H1 (cell line): ENCODE measurements at regions of chr1 and their contacts with region 1.

Region 1: GRCh38 chr1:155091071-155091709 is 12.6 kb downstream of the EFNA3 start:
- DNase-seq: peak; percentile 68 to 97
- H3K4me3 ChIP-seq: 0 out of 8 replicates have a peak overlapping the region, but pooled peaks of 1 of the 4 experiments have one; percentile 28
- H3K27ac ChIP-seq: no peak overlapping the region
- H3K4me1 ChIP-seq: peaks cover 0 to 17% (median 14%) of the 10 kb centered on the region in 4 experiments; a peak in 6 of 7 replicates
- H3K27me3 ChIP-seq: peaks cover 0 to 13% (median 2%) of the 10 kb centered on the region in 4 experiments; a peak in 2 of 7 replicates
- CTCF ChIP-seq: peak in 2 of 3 experiments; percentile 98; a peak in 3 of 4 replicates
- EP300 ChIP-seq: no peak
- POLR2A ChIP-seq: no peak
- RAD21 ChIP-seq: peak; percentile 80 to 87

Region 2: GRCh38 chr1:155105604-155106022 is 14.4 kb after region 1 on chr1:
- CTCF ChIA-PET with region 1: interaction called, 29 read pairs
- POLR2A ChIA-PET with region 1: no interaction called
- DNase-seq: no peak
- H3K4me3 ChIP-seq: no peak overlapping the region
- H3K27ac ChIP-seq: no peak overlapping the region
- H3K4me1 ChIP-seq: no peaks in the 10 kb centered on the region
- H3K27me3 ChIP-seq: no peaks in the 10 kb centered on the region
- CTCF ChIP-seq: no peak
- EP300 ChIP-seq: no peak
- POLR2A ChIP-seq: no peak
- RAD21 ChIP-seq: no peak

Region 3: GRCh38 chr1:155117617-155118016 is 26.4 kb after region 1 on chr1:
- CTCF ChIA-PET with region 1: interaction called, 13 read pairs
- POLR2A ChIA-PET with region 1: interaction called, 4 read pairs
- DNase-seq: no peak
- H3K4me3 ChIP-seq: no peak overlapping the region
- H3K27ac ChIP-seq: no peak overlapping the region
- H3K4me1 ChIP-seq: no peaks in the 10 kb centered on the region
- H3K27me3 ChIP-seq: peaks cover 0 to 3% (median 0%) of the 10 kb centered on the region in 4 experiments; a peak in 1 of 7 replicates
- CTCF ChIP-seq: no peak
- EP300 ChIP-seq: no peak
- POLR2A ChIP-seq: no peak
- RAD21 ChIP-seq: no peak

Region 4: GRCh38 chr1:155127105-155127964 is 36.1 kb after region 1 on chr1 and contains the start of gene EFNA1:
- CTCF ChIA-PET with region 1: interaction called, 73 read pairs
- POLR2A ChIA-PET with region 1: interaction called, 5 read pairs
- DNase-seq: peak in 1 of 2 experiments; percentile 63
- H3K4me3 ChIP-seq: peak within 1 kb of the TSS; percentile 45 to 71 (median 64)
- H3K27ac ChIP-seq: no peak within 1 kb of the TSS
- H3K4me1 ChIP-seq: peaks cover 16 to 58% (median 40%) of the 10 kb centered on the region in 4 experiments
- H3K27me3 ChIP-seq: peaks cover 33 to 50% (median 45%) of the 10 kb centered on the region in 4 experiments
- CTCF ChIP-seq: no peak
- EP300 ChIP-seq: no peak
- POLR2A ChIP-seq: no peak
- RAD21 ChIP-seq: no peak
- total RNA-seq, gene EFNA1: 4.0 and 4.9 TPM in 2 replicates

Region 5: DNA sequence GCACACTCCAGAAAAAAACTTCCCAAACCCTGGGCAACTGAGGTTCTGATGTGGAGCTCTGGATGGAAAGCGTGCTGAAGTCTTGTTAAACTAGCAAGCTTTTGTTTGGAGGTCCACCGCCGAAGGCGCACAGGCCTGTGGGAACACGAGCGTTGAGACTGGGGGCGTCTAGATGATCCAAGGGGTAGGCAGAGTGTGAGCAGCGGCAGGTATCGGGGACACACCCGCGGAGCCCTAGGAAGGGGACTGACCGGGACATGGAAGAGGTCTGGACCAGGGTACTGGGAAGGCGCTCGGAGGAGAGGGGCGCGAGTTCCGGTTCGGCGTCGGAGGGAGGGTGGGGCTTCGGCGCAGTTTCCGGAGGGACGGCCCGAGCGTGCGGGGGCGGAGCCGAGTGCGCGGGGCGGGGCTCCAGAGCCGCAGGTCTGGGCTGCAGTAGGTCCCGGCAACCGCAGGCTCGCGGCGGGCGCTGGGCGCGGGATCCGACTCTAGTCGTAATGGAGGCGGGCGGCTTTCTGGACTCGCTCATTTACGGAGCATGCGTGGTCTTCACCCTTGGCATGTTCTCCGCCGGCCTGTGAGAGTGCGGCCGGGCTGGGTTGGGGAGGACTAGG is 44.3 kb after region 1 on chr1 and contains the start of gene SLC50A1:
- CTCF ChIA-PET with region 1: interaction called, 73 read pairs
- POLR2A ChIA-PET with region 1: interaction called, 4 read pairs
- DNase-seq: peak; percentile 76 to 97
- H3K4me3 ChIP-seq: peak within 1 kb of the TSS; percentile 67 to 89 (median 85)
- H3K27ac ChIP-seq: peak within 1 kb of the TSS; percentile 61; the same call in 1 of the 2 replicates
- H3K4me1 ChIP-seq: peaks cover 4 to 26% (median 10%) of the 10 kb centered on the region in 4 experiments; a peak in 5 of 7 replicates
- H3K27me3 ChIP-seq: no peaks in the 10 kb centered on the region
- CTCF ChIP-seq: peak in 1 of 3 experiments; percentile 28; a peak in 2 of 4 replicates
- EP300 ChIP-seq: no peak
- POLR2A ChIP-seq: peak in 1 of 2 experiments; percentile 69; a peak in 2 of 3 replicates
- RAD21 ChIP-seq: no peak; a peak in 1 of 4 replicates
- total RNA-seq, gene SLC50A1: 36.5 and 41.6 TPM in 2 replicates

Region 6: GRCh38 chr1:155145491-155145890 is 54.3 kb after region 1 on chr1:
- CTCF ChIA-PET with region 1: interaction called, 12 read pairs
- POLR2A ChIA-PET with region 1: no interaction called
- DNase-seq: no peak
- H3K4me3 ChIP-seq: no peak overlapping the region
- H3K27ac ChIP-seq: no peak overlapping the region
- H3K4me1 ChIP-seq: no peaks in the 10 kb centered on the region
- H3K27me3 ChIP-seq: peaks cover 0 to 3% (median 0%) of the 10 kb centered on the region in 4 experiments; a peak in 2 of 7 replicates
- CTCF ChIP-seq: peak in 2 of 3 experiments; percentile 24 to 30; a peak in 2 of 4 replicates
- EP300 ChIP-seq: no peak
- POLR2A ChIP-seq: no peak
- RAD21 ChIP-seq: peak in 1 of 2 experiments; percentile 22; a peak in 2 of 4 replicates

Region 7: DNA sequence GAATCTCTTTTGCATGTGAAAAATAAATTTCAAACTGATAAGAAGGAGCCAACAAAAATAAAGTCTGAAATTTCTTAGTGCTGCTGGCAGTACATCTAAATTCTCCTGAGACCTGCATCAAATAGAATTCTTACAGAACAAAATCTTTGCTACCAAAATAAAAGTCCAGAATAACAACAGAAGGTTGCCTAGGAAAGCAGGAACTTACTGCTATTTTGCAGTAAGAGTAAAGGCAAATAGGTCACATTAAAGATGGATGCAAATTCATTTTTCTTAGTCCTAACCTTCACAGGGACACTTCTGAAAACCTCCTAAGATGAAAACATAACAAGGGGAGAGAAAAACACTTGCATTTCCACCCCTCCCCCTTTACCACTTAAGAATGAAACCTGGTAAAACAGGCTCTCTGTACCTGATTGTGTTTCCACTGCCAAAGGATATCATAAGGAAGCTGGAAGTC is 288.5 kb after region 1 on chr1:
- CTCF ChIA-PET with region 1: no interaction called
- POLR2A ChIA-PET with region 1: no interaction called
- DNase-seq: no peak
- H3K4me3 ChIP-seq: no peak overlapping the region
- H3K27ac ChIP-seq: no peak overlapping the region
- H3K4me1 ChIP-seq: no peaks in the 10 kb centered on the region
- H3K27me3 ChIP-seq: no peaks in the 10 kb centered on the region
- CTCF ChIP-seq: no peak
- EP300 ChIP-seq: no peak
- POLR2A ChIP-seq: no peak
- RAD21 ChIP-seq: no peak